HAP-1 (cell line): ENCODE measurements at regions of chr17 and their contacts with region 1.

Region 1: GRCh38 chr17:61837175-61838051 is 25.9 kb downstream of the BRIP1 start:
- DNase-seq: peak; percentile 50 to 78
- H3K4me3 ChIP-seq: no peak overlapping the region
- H3K4me1 ChIP-seq: peaks cover 17% of the 10 kb centered on the region
- H3K27me3 ChIP-seq: no peaks in the 10 kb centered on the region

Region 2: DNA sequence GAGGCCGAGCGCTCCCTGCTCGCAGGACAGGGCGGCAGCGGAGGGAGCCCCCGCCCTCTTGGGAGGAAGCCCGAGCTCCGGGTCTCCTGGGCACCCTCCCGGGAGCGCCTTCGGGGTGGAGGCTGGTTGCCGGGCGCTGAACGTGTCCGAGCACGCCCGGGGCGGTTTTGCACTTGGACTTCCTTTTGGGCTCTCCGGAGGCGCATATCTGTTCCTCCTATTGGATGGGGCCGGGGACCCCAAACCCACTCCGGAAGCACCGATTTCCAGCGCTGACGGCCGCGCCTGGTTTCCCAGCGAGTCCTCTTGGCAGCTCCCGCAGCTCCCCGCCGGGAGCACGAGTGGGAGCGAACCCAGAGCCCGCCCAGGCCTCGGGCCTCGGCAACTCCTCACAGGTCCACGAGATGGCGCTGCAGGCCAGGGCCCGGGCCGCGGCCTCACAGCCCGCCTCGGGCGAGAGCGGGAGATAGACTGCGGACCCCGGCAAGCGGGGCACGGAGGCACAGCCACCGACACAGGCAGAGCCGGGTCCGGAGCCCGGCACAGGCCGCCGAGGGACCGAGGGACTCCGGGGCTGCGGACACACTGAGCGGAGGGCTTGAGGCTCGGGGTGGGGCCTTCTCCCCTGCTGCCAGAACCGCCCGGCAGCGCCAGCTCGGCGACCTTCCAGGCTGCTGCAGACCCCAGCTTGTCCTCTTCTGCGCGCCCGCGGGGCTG is 425.1 kb before region 1 on chr17:
- in situ Hi-C with region 1: loop called (anchors 5 kb)
- DNase-seq: peak; percentile 65 to 84
- H3K4me3 ChIP-seq: peak overlapping the region; percentile 55
- H3K4me1 ChIP-seq: peaks cover 22% of the 10 kb centered on the region
- H3K27me3 ChIP-seq: no peaks in the 10 kb centered on the region

Region 3: DNA sequence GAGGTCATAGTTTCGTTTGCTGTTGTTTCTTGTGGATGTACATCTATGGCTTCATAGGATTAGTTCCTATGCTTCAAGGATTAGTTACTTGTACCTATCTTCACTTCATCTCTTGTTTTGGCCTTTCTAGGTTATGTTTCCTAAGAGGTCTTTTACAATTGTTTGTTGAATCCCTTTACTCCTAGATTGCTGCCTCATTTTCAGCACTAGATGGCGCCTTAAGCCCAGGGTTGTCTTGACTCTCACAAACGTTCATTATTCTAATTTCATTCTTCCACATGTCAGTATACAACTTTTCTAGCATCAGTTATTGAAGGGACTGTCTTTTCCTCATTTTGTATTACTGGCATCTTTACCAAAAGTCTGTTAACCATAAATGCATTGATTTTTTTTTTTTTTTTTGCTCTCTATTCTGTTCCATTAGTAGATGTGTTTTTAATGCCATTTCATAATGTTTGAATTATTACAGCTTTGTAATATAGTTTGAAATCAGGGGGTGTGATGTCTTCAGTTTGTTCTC is 201.4 kb before region 1 on chr17:
- in situ Hi-C with region 1: loop called (anchors 5 kb)
- DNase-seq: peak; percentile 68 to 80
- H3K4me3 ChIP-seq: no peak overlapping the region
- H3K4me1 ChIP-seq: no peaks in the 10 kb centered on the region
- H3K27me3 ChIP-seq: no peaks in the 10 kb centered on the region